CD4-positive, alpha-beta memory T cell (primary cell): ENCODE measurements at regions of chr7 and their contacts with region 1.

Region 1: DNA sequence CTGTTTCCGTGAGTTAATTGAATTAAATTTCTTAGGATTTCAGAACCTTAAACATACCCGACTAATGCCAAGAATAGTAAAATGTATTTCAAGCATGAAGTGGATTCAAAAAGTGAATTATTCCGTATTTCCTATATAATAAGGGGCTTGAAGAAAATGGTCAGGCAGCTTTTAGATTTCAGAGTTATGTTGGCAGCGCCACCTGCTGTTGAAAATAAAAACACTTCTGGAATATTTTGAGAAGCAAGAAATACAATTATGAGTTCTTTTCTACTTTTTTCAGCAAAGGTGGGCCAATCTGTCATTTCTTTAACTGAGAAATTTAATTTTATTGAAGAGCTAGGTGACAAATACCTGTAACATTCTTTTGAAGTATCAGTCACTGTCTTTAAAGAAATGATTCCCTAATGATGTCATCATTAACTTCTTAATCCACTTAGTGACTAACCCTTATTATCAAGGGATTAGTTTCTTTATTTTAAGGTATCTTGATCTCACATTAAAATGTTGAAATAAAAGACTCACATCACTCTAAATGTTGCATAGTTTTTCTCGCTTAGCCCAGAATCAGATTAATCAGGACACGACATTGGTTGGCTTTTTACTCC is 36.6 kb upstream of the AGR3 start:
- DNase-seq: peak in 3 of 5 donors; percentile 11 to 24 (median 21)
- H3K4me3 ChIP-seq: no peak overlapping the region
- H3K4me3 Mint-ChIP-seq: no peak overlapping the region
- H3K27ac ChIP-seq: no peak overlapping the region
- H3K27ac Mint-ChIP-seq: no peak overlapping the region
- H3K4me1 ChIP-seq: no peaks in the 10 kb centered on the region
- H3K4me1 Mint-ChIP-seq: peaks cover 0 to 6% (median 4%) of the 10 kb centered on the region in 4 donors
- H3K27me3 ChIP-seq: no peaks in the 10 kb centered on the region
- H3K27me3 Mint-ChIP-seq: peaks cover 0 to 2% of the 10 kb centered on the region in 2 donors

Region 2: GRCh38 chr7:16409777-16410176 is 508.6 kb before region 1 on chr7:
- CTCF ChIA-PET with region 1: no interaction called
- POLR2A ChIA-PET with region 1: no interaction called
- intact Hi-C with region 1: loop called (anchors 5 kb)
- DNase-seq: no peak
- H3K4me3 ChIP-seq: no peak overlapping the region
- H3K4me3 Mint-ChIP-seq: no peak overlapping the region
- H3K27ac ChIP-seq: no peak overlapping the region
- H3K27ac Mint-ChIP-seq: no peak overlapping the region
- H3K4me1 ChIP-seq: no peaks in the 10 kb centered on the region
- H3K4me1 Mint-ChIP-seq: no peaks in the 10 kb centered on the region
- H3K27me3 ChIP-seq: no peaks in the 10 kb centered on the region
- H3K27me3 Mint-ChIP-seq: peaks cover 0 to 5% of the 10 kb centered on the region in 2 donors

Region 3: GRCh38 chr7:16695621-16696237 is 222.7 kb before region 1 on chr7:
- CTCF ChIA-PET with region 1: no interaction called
- POLR2A ChIA-PET with region 1: no interaction called
- intact Hi-C with region 1: loop called (anchors 10 kb)
- DNase-seq: no peak
- H3K4me3 ChIP-seq: no peak overlapping the region
- H3K4me3 Mint-ChIP-seq: no peak overlapping the region
- H3K27ac ChIP-seq: no peak overlapping the region
- H3K27ac Mint-ChIP-seq: no peak overlapping the region
- H3K4me1 ChIP-seq: no peaks in the 10 kb centered on the region
- H3K4me1 Mint-ChIP-seq: no peaks in the 10 kb centered on the region
- H3K27me3 ChIP-seq: no peaks in the 10 kb centered on the region
- H3K27me3 Mint-ChIP-seq: no peaks in the 10 kb centered on the region

Region 4: GRCh38 chr7:16891338-16891737 is 27.1 kb before region 1 on chr7:
- CTCF ChIA-PET with region 1: interaction called, 11 read pairs
- POLR2A ChIA-PET with region 1: no interaction called
- intact Hi-C with region 1: loop called (anchors 1 kb)
- DNase-seq: peak in 4 of 5 donors; percentile 24 to 39 (median 34)
- H3K4me3 ChIP-seq: no peak overlapping the region
- H3K4me3 Mint-ChIP-seq: no peak overlapping the region
- H3K27ac ChIP-seq: no peak overlapping the region
- H3K27ac Mint-ChIP-seq: no peak overlapping the region
- H3K4me1 ChIP-seq: no peaks in the 10 kb centered on the region
- H3K4me1 Mint-ChIP-seq: peaks cover 9 to 18% (median 12%) of the 10 kb centered on the region in 4 donors
- H3K27me3 ChIP-seq: no peaks in the 10 kb centered on the region
- H3K27me3 Mint-ChIP-seq: peaks cover 1 to 3% of the 10 kb centered on the region in 2 donors

Region 5: DNA sequence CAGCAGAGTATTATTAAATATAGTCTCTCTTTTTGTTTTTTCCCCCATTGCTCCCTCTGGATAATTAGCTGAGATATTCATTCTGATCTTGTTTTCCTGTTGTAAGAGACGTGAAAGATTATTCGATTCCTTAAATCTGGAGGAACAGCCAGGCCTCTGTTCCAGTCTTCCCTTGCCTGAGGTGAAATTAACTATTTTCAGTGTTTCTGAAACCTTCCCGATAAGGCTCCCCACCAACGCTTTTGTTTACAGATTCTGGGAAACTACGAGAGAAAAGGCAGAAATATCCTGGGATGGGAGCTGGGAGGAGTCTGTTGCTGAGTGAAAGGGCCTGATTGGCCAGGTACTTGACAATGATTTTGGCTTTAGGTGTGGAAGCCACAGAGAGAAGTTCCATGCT is 27.0 kb after region 1 on chr7:
- CTCF ChIA-PET with region 1: no interaction called
- POLR2A ChIA-PET with region 1: no interaction called
- intact Hi-C with region 1: no loop called
- DNase-seq: no peak
- H3K4me3 ChIP-seq: no peak overlapping the region
- H3K4me3 Mint-ChIP-seq: no peak overlapping the region
- H3K27ac ChIP-seq: no peak overlapping the region
- H3K27ac Mint-ChIP-seq: no peak overlapping the region
- H3K4me1 ChIP-seq: peaks cover 7% of the 10 kb centered on the region
- H3K4me1 Mint-ChIP-seq: peaks cover 0 to 9% (median 6%) of the 10 kb centered on the region in 4 donors
- H3K27me3 ChIP-seq: no peaks in the 10 kb centered on the region
- H3K27me3 Mint-ChIP-seq: peaks cover 0 to 3% of the 10 kb centered on the region in 2 donors